ENCODE measurements at regions of chr14 and their contacts with region 1.

Region 1: GRCh38 chr14:54566410-54567223 is at the start of gene SAMD4A:
- DNase-seq: peak; percentile 72
- H3K4me3 Mint-ChIP-seq: peak within 1 kb of the TSS; percentile 91
- H3K27ac Mint-ChIP-seq: peak within 1 kb of the TSS; percentile 72
- H3K4me1 Mint-ChIP-seq: peaks cover 27% of the 10 kb centered on the region
- H3K27me3 Mint-ChIP-seq: peaks cover 7% of the 10 kb centered on the region
- total RNA-seq, gene SAMD4A: 2.4 to 2.6 TPM

Region 2: DNA sequence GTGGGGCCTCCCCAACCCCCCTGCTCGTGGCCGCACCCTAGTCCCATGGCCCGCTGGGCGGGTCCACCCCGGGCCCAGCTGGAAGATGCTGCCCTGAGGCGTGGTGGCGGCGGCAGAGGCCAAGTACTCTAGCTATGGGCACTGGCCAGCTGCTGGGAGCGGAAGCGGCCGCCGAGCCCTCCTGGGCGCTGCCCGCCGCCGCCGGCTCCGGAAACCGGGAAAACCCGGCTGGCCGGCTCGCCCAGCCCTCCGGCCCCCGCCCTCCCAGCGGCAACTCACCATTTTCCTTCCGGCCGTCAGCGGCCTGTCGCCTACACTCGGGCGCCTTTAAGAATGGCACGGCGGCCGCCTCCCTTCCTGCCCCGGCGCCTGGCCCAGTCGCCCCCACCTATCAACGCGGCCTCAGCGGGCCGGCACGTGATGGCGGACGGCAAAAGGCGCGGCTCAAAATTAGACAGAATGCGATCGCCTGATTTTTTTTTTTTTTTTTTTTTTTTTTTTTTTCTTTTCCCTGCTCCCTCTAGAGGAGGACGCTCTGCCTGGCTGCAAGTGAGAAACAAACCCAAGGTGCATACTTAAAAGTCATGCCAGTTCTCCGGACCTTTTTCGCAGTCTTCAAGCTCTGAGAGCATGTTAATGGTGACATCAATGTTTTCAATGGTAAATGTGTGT is 77.8 kb before region 1 on chr14 and contains the start of gene GMFB:
- CTCF ChIA-PET with region 1: no interaction called
- POLR2A ChIA-PET with region 1: no interaction called
- intact Hi-C with region 1: loop called (anchors 2 kb)
- DNase-seq: peak; percentile 94
- H3K4me3 Mint-ChIP-seq: peak within 1 kb of the TSS; percentile 89
- H3K27ac Mint-ChIP-seq: peak within 1 kb of the TSS; percentile 90
- H3K4me1 Mint-ChIP-seq: peaks cover 55% of the 10 kb centered on the region
- H3K27me3 Mint-ChIP-seq: no peaks in the 10 kb centered on the region
- total RNA-seq, gene GMFB: 39.0 to 43.6 TPM

Region 3: GRCh38 chr14:54642801-54643697 is 76.4 kb after region 1 on chr14:
- CTCF ChIA-PET with region 1: interaction called, 14 read pairs
- POLR2A ChIA-PET with region 1: no interaction called
- intact Hi-C with region 1: loop called (anchors 2 kb)
- DNase-seq: no peak
- H3K4me3 Mint-ChIP-seq: no peak overlapping the region
- H3K27ac Mint-ChIP-seq: no peak overlapping the region
- H3K4me1 Mint-ChIP-seq: peaks cover 11% of the 10 kb centered on the region
- H3K27me3 Mint-ChIP-seq: peaks cover 3% of the 10 kb centered on the region

Region 4: GRCh38 chr14:54722781-54723432 is 156.3 kb after region 1 on chr14:
- CTCF ChIA-PET with region 1: interaction called, 9 read pairs
- POLR2A ChIA-PET with region 1: no interaction called
- intact Hi-C with region 1: loop called (anchors 2 kb)
- DNase-seq: no peak
- H3K4me3 Mint-ChIP-seq: no peak overlapping the region
- H3K27ac Mint-ChIP-seq: no peak overlapping the region
- H3K4me1 Mint-ChIP-seq: peaks cover under 1% of the 10 kb centered on the region
- H3K27me3 Mint-ChIP-seq: peaks cover 26% of the 10 kb centered on the region

Region 5: DNA sequence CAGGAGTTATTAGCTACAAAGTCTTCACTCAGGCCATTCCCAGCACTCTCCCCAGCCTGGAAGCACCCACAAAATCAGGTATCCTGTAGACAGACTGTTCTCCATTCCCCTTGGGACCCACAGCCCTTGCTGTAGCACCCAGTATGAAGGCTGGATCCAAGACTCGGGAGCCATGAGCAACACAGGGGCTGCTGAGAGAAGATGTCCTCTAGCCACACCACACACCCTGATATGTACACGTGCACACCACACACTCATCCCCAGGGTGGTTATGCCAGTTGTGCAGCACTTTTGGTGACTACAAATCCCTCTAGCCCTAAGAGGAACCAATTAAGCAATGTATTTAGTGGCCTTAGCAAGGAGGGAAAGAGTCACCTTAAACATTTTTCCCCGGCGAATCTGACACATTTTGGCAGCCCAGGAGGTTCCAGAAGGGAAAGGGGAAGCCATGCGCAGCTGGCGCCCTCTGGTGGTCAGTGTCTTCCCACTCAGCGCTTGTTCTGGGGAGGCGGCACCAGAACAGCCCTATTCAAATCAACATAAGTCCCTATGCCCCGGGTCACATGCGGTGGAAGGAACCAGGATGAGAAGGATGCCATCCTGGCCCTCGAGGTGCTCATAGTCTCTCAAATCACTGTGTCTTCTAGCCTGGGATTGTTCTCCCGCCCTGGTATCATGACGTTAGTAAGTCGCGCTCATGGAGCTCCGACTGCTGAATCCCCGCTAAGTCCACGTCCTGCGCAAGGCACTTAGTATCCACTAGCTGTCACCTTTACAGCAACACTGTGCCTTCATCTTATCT is 239.1 kb after region 1 on chr14:
- CTCF ChIA-PET with region 1: interaction called, 101 read pairs
- POLR2A ChIA-PET with region 1: no interaction called
- intact Hi-C with region 1: loop called (anchors 1 kb)
- DNase-seq: peak; percentile 86
- H3K4me3 Mint-ChIP-seq: no peak overlapping the region
- H3K27ac Mint-ChIP-seq: no peak overlapping the region
- H3K4me1 Mint-ChIP-seq: peaks cover 13% of the 10 kb centered on the region
- H3K27me3 Mint-ChIP-seq: peaks cover 21% of the 10 kb centered on the region